PC-9 (cell line): ENCODE measurements at regions of chr7 and their contacts with region 1.

Region 1: GRCh38 chr7:6306471-6306870 is 34.0 kb upstream of the CYTH3 start:
- DNase-seq: peak; percentile 90 to 99
- H3K4me3 ChIP-seq: no peak overlapping the region
- H3K27ac ChIP-seq: peak overlapping the region; percentile 75
- H3K4me1 ChIP-seq: peaks cover 36% of the 10 kb centered on the region
- H3K27me3 ChIP-seq: no peaks in the 10 kb centered on the region
- CTCF ChIP-seq: no peak

Region 2: GRCh38 chr7:6231184-6231583 is 75.3 kb before region 1 on chr7:
- CTCF ChIA-PET with region 1: no interaction called
- POLR2A ChIA-PET with region 1: interaction called, 13 read pairs
- intact Hi-C with region 1: no loop called
- DNase-seq: no peak
- H3K4me3 ChIP-seq: no peak overlapping the region
- H3K27ac ChIP-seq: no peak overlapping the region
- H3K4me1 ChIP-seq: peaks cover 1% of the 10 kb centered on the region; the same call in 1 of the 2 replicates
- H3K27me3 ChIP-seq: no peaks in the 10 kb centered on the region
- CTCF ChIP-seq: no peak

Region 3: GRCh38 chr7:6283391-6284390 is 22.8 kb before region 1 on chr7:
- CTCF ChIA-PET with region 1: no interaction called
- POLR2A ChIA-PET with region 1: interaction called, 11 read pairs
- intact Hi-C with region 1: loop called (anchors 1 kb)
- DNase-seq: peak; percentile 90 to 93
- H3K4me3 ChIP-seq: peak overlapping the region; percentile 48; the same call in 1 of the 2 replicates
- H3K27ac ChIP-seq: peak overlapping the region; percentile 100
- H3K4me1 ChIP-seq: peaks cover 35% of the 10 kb centered on the region
- H3K27me3 ChIP-seq: no peaks in the 10 kb centered on the region
- CTCF ChIP-seq: no peak

Region 4: DNA sequence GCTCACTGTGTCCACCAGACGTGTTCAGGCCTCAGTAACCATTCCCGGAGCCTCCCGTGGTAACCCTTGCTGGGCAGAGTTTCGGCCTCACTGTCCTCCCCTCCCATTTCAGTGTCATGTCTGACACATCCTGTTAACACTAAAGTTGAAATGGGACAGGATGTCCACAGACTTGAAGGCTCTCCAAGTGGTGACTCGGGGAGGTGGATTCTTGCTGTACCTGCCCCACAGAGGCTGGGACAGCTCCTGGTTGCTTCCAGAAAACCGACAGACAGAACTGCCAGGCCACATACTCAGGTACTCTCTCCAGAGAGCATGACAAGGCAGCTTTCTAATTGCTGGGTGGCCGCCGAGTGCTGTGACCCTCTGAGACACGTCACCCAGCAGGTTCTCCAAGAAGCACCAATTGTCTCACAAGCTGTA is 16.1 kb before region 1 on chr7:
- CTCF ChIA-PET with region 1: interaction called, 5 read pairs
- POLR2A ChIA-PET with region 1: interaction called, 4 read pairs
- intact Hi-C with region 1: loop called (anchors 2 kb)
- DNase-seq: peak; percentile 85 to 88
- H3K4me3 ChIP-seq: no peak overlapping the region
- H3K27ac ChIP-seq: peak overlapping the region; percentile 84
- H3K4me1 ChIP-seq: peaks cover 13% of the 10 kb centered on the region
- H3K27me3 ChIP-seq: no peaks in the 10 kb centered on the region
- CTCF ChIP-seq: no peak

Region 5: GRCh38 chr7:6658618-6659341 is 352.3 kb after region 1 on chr7:
- CTCF ChIA-PET with region 1: no interaction called
- POLR2A ChIA-PET with region 1: no interaction called
- intact Hi-C with region 1: no loop called
- DNase-seq: no peak
- H3K4me3 ChIP-seq: no peak overlapping the region
- H3K27ac ChIP-seq: no peak overlapping the region
- H3K4me1 ChIP-seq: no peaks in the 10 kb centered on the region
- H3K27me3 ChIP-seq: no peaks in the 10 kb centered on the region; the same call in 1 of the 2 replicates
- CTCF ChIP-seq: no peak